ENCODE measurements at regions of chr3 and their contacts with region 1.

Region 1: GRCh38 chr3:141311496-141312353 is 56.6 kb upstream of the ZBTB38 start:
- DNase-seq: peak; percentile 92
- ATAC-seq: peak; percentile 96
- H3K4me3 ChIP-seq: peak overlapping the region; percentile 79
- H3K27ac ChIP-seq: peak overlapping the region; percentile 85
- H3K4me1 ChIP-seq: peaks cover 18% of the 10 kb centered on the region
- H3K27me3 ChIP-seq: no peaks in the 10 kb centered on the region
- CTCF ChIP-seq: peak; percentile 79 to 95 (median 81)
- EP300 ChIP-seq: no peak
- POLR2A ChIP-seq: peak; percentile 95
- RAD21 ChIP-seq: peak; percentile 83

Region 2: GRCh38 chr3:141331377-141332318 is 19.9 kb after region 1 on chr3:
- CTCF ChIA-PET with region 1: interaction called, 83 read pairs
- POLR2A ChIA-PET with region 1: interaction called, 8 read pairs
- RAD21 ChIA-PET with region 1: interaction called, 53 read pairs
- SMC1A ChIA-PET with region 1: interaction called, 112 read pairs
- in situ Hi-C with region 1: no loop called
- intact Hi-C with region 1: no loop called
- DNase-seq: peak; percentile 69
- ATAC-seq: peak; percentile 24
- H3K4me3 ChIP-seq: no peak overlapping the region
- H3K27ac ChIP-seq: peak overlapping the region; percentile 62
- H3K4me1 ChIP-seq: peaks cover 53% of the 10 kb centered on the region
- H3K27me3 ChIP-seq: no peaks in the 10 kb centered on the region
- CTCF ChIP-seq: no peak
- EP300 ChIP-seq: peak in 1 of 2 experiments; percentile 45; a peak in 1 of 4 replicates
- POLR2A ChIP-seq: no peak
- RAD21 ChIP-seq: no peak

Region 3: DNA sequence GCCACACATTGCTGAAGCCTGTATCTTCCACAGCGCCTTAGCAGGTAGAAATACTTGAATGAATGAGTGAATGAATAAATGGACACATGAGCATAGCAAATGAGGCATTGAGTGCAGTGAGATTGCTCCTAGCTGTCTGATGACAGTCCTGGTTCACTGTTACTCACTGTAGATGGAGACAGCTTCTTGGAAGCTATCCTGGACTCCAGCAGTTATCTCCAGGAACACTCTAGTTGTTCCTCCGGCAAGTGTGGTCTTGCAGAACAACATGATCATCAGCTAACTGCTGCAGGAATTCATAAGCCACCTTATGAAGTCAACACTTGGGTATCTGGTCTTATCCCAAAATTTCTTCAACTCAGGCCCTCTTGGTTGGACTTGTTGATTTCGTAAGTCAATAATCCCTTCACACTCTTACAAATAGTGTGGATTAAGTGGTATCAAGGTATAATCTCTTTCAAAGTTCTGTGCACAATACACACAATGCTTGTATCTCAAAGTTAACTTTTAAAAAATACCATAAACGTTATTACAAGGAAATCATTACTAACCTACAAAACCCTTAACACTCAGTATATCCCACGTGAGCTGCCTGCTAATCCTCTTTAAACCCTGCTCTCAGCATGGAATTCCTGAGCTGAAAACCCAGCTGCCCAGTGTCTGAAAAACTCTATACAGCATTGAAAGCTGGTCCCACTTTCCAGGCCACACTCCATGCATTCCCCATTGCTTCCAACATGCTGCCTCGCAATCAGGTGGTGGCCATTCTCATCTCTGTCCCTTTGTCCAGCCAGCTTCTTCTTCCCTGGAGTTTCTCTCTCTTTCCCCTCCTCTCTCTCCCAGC is 42.1 kb after region 1 on chr3:
- CTCF ChIA-PET with region 1: interaction called, 155 read pairs
- POLR2A ChIA-PET with region 1: no interaction called
- RAD21 ChIA-PET with region 1: interaction called, 119 read pairs
- SMC1A ChIA-PET with region 1: interaction called, 80 read pairs
- in situ Hi-C with region 1: no loop called
- intact Hi-C with region 1: no loop called
- DNase-seq: no peak
- ATAC-seq: no peak
- H3K4me3 ChIP-seq: no peak overlapping the region
- H3K27ac ChIP-seq: no peak overlapping the region
- H3K4me1 ChIP-seq: no peaks in the 10 kb centered on the region
- H3K27me3 ChIP-seq: no peaks in the 10 kb centered on the region
- CTCF ChIP-seq: no peak
- EP300 ChIP-seq: no peak
- POLR2A ChIP-seq: no peak
- RAD21 ChIP-seq: no peak

Region 4: GRCh38 chr3:141379250-141379966 is 67.7 kb after region 1 on chr3:
- CTCF ChIA-PET with region 1: interaction called, 4 read pairs
- POLR2A ChIA-PET with region 1: interaction called, 5 read pairs
- RAD21 ChIA-PET with region 1: interaction called, 18 read pairs
- SMC1A ChIA-PET with region 1: interaction called, 18 read pairs
- in situ Hi-C with region 1: no loop called
- intact Hi-C with region 1: no loop called
- DNase-seq: peak; percentile 95
- ATAC-seq: peak; percentile 62
- H3K4me3 ChIP-seq: peak overlapping the region; percentile 41; the same call in 1 of the 2 replicates
- H3K27ac ChIP-seq: peak overlapping the region; percentile 94
- H3K4me1 ChIP-seq: peaks cover 81% of the 10 kb centered on the region
- H3K27me3 ChIP-seq: no peaks in the 10 kb centered on the region
- CTCF ChIP-seq: no peak
- EP300 ChIP-seq: peak; percentile 93 to 98
- POLR2A ChIP-seq: peak; percentile 68
- RAD21 ChIP-seq: peak; percentile 21; the same call in 1 of the 2 replicates

Region 5: DNA sequence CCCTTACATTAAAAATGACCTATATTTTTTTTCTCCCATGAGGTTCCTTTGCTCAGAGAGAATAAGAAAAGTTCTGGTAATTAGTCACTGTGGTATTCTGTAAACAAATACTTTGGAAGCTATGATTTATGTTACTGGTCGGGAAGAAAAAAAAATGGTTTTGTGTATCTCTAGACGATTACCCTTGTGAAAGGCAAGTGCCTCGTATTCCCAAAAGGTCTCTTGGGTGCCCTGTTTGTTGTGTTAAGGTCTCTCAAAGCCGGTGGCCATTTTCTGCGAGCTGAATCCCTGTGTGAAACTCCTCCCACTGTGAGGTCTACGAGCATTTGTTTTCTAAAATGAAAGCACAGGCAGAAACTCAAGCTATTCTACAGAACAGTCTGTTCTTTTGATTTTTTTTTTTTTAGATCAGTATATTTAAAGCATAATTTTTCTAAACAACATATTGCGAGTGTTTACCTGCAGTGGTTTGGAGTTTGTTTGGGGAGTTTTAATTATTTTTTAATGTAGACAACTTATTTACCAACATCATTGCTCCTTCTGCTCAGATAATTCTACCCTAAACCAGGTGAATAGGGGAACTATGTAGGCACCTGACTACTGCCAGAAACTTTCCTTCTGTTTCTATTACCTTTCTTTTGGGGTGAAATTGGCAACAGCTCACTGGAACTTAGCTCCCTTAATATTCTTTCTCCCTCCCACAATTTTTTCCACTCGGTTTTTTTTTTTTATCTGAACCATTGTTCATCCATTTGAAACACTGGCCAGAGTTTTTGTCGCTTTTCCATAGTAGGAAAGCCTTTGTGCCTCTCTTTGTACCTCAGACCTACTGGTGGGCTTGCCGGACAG is 100.6 kb after region 1 on chr3:
- CTCF ChIA-PET with region 1: interaction called, 29 read pairs
- POLR2A ChIA-PET with region 1: interaction called, 6 read pairs
- RAD21 ChIA-PET with region 1: interaction called, 10 read pairs
- SMC1A ChIA-PET with region 1: interaction called, 23 read pairs
- in situ Hi-C with region 1: no loop called
- intact Hi-C with region 1: no loop called
- DNase-seq: no peak
- ATAC-seq: peak; percentile 63
- H3K4me3 ChIP-seq: peak overlapping the region; percentile 57
- H3K27ac ChIP-seq: peak overlapping the region; percentile 92
- H3K4me1 ChIP-seq: peaks cover 63% of the 10 kb centered on the region
- H3K27me3 ChIP-seq: no peaks in the 10 kb centered on the region
- CTCF ChIP-seq: no peak
- EP300 ChIP-seq: no peak
- POLR2A ChIP-seq: 0 out of 2 replicates have a peak, but pooled peaks have one; percentile 34
- RAD21 ChIP-seq: no peak

Region 6: DNA sequence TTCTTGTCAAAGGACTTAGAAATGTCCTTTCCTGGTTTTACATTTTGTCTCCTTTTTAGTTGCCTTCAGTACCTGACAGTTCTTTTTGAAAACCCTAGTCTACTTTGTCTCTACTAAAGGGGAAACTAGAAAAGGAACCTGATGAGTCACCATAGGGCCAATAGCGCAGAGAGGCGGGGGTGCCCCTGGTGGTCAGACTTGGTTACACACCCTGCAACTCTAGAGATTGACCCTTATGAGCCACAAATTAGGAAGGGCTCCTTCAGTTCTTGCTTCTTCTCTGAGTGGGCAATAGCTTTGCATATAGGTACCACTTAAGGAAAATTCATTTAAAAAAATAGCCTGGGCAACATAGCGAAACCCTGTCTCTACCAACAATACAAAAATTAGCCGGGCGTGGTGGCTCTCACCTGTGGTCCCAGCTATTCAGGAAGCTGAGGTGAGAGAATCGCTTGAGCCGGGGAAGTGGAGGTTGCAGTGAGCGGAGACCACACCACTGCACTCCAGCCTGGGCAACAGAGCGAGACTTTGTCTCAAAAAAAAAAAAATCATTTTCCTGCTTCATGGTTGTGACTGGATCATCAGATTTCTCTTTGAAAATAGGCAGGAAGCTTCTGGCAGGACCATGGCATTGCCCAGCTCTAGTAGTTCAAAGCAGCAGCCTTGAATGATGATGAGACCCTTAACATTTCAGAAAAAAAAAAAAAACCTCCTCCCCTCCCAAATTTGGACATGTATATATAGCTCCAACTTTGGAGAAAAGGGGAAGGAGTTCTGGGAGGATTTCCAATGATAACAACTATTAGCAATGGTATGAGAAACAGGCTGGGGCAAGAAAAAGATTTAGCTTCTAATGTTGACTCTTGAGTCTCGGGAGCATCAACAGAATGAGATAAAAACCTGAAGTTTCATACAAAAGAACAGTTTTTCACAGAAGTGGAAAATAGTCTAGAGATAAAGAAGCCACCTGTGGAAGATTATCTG is 129.9 kb after region 1 on chr3:
- CTCF ChIA-PET with region 1: interaction called, 54 read pairs
- POLR2A ChIA-PET with region 1: interaction called, 8 read pairs
- RAD21 ChIA-PET with region 1: interaction called, 50 read pairs
- SMC1A ChIA-PET with region 1: interaction called, 209 read pairs
- in situ Hi-C with region 1: no loop called
- intact Hi-C with region 1: loop called (anchors 1 kb)
- DNase-seq: peak; percentile 84
- ATAC-seq: peak; percentile 99
- H3K4me3 ChIP-seq: no peak overlapping the region
- H3K27ac ChIP-seq: peak overlapping the region; percentile 73
- H3K4me1 ChIP-seq: peaks cover 31% of the 10 kb centered on the region
- H3K27me3 ChIP-seq: no peaks in the 10 kb centered on the region
- CTCF ChIP-seq: peak; percentile 94 to 96 (median 95)
- EP300 ChIP-seq: no peak
- POLR2A ChIP-seq: no peak
- RAD21 ChIP-seq: peak; percentile 86

Region 7: DNA sequence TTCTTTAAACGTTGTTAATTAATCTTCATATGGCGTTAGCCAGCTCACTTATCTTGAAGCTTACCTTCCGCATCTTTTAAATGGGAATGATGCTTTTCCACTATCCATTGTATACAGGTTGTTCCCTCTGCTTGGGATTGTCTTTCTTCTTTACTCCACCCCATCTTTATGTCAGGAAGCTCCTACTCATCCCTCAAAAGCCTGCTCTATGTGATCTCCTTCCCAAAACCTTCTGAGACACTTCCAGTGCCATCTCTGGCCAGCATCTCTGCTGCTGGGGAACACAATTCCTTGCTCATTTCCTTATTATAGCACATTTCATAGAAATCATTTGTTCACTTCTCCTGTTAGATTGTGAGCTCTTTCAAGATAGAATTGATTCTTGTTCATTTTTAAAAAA is 179.4 kb after region 1 on chr3:
- CTCF ChIA-PET with region 1: interaction called, 3 read pairs
- POLR2A ChIA-PET with region 1: interaction called, 10 read pairs
- RAD21 ChIA-PET with region 1: interaction called, 4 read pairs
- SMC1A ChIA-PET with region 1: interaction called, 3 read pairs
- in situ Hi-C with region 1: no loop called
- intact Hi-C with region 1: no loop called
- DNase-seq: no peak
- ATAC-seq: no peak
- H3K4me3 ChIP-seq: no peak overlapping the region
- H3K27ac ChIP-seq: no peak overlapping the region
- H3K4me1 ChIP-seq: peaks cover 12% of the 10 kb centered on the region
- H3K27me3 ChIP-seq: no peaks in the 10 kb centered on the region
- CTCF ChIP-seq: no peak
- EP300 ChIP-seq: no peak
- POLR2A ChIP-seq: no peak
- RAD21 ChIP-seq: no peak